HCT116 (cell line): ENCODE measurements at regions of chr6 and their contacts with region 1.

Region 1: DNA sequence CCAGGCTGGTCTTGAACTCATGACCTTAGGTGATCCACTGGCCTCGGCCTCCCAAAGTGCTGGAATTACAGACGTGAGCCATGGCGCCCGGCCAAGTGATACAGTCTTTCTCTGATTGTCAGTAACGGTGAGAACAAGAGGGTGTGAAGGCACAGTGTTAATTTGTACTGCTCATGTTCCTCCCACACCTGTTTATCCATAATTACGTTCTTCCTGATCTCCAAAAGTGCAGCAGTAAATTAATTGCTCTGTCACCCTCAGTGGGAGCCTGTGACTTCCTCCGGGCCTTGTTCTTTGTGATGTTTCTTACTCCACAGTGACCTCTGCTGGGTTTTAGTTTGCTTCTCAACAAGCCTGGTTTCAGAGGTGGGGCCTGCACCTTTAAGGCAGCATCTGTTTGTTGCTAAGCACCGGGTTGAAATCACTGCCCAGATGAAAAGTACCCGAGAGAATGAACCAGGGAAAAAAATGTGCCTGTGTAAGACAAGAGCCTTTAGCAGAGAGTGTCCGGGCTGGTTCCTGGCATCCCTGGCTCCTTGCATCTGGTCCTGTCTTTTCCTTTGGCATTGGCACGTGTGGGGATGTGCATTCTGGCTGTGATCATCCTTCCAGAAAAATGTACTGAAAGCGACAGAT is 89.1 kb upstream of the CLDN20 start:
- DNase-seq: peak; percentile 85
- ATAC-seq: peak; percentile 86
- H3K4me3 ChIP-seq: no peak overlapping the region
- H3K27ac ChIP-seq: no peak overlapping the region
- H3K4me1 ChIP-seq: peaks cover 19 to 37% of the 10 kb centered on the region in 2 experiments
- H3K27me3 ChIP-seq: no peaks in the 10 kb centered on the region
- CTCF ChIP-seq: peak; percentile 65 to 94 (median 72)
- POLR2A ChIP-seq: no peak
- RAD21 ChIP-seq: peak; percentile 96

Region 2: DNA sequence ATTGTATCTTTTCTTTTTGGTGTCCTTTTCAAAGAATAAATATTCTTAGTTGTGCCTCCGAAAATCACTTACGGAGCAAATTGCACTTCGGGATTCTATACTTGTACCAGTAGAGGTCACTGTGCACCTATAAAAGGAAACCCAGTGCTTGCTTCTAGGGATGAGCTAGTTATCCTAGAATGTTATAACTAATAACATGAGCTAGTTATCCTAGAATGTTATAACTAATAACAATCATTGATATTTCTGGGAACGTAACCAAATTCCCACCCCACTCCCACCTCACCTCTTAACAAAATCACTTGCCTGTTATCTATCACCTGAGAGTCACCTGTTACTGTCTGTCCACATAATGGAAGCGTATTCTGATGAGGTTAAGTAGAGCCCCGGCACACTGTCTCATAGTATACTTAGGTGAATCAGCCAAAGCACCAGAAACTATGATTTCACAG is 306.5 kb before region 1 on chr6:
- CTCF ChIA-PET with region 1: interaction called, 15 read pairs
- POLR2A ChIA-PET with region 1: no interaction called
- RAD21 ChIA-PET with region 1: interaction called in 1 of 2 experiments, 8 read pairs
- intact Hi-C with region 1: loop called (anchors 1 kb)
- DNase-seq: peak; percentile 12
- ATAC-seq: peak; percentile 68
- H3K4me3 ChIP-seq: no peak overlapping the region
- H3K27ac ChIP-seq: no peak overlapping the region
- H3K4me1 ChIP-seq: no peaks in the 10 kb centered on the region
- H3K27me3 ChIP-seq: no peaks in the 10 kb centered on the region
- CTCF ChIP-seq: peak; percentile 29 to 80 (median 67); a peak in 5 of 6 replicates
- POLR2A ChIP-seq: no peak
- RAD21 ChIP-seq: peak; percentile 70

Region 3: DNA sequence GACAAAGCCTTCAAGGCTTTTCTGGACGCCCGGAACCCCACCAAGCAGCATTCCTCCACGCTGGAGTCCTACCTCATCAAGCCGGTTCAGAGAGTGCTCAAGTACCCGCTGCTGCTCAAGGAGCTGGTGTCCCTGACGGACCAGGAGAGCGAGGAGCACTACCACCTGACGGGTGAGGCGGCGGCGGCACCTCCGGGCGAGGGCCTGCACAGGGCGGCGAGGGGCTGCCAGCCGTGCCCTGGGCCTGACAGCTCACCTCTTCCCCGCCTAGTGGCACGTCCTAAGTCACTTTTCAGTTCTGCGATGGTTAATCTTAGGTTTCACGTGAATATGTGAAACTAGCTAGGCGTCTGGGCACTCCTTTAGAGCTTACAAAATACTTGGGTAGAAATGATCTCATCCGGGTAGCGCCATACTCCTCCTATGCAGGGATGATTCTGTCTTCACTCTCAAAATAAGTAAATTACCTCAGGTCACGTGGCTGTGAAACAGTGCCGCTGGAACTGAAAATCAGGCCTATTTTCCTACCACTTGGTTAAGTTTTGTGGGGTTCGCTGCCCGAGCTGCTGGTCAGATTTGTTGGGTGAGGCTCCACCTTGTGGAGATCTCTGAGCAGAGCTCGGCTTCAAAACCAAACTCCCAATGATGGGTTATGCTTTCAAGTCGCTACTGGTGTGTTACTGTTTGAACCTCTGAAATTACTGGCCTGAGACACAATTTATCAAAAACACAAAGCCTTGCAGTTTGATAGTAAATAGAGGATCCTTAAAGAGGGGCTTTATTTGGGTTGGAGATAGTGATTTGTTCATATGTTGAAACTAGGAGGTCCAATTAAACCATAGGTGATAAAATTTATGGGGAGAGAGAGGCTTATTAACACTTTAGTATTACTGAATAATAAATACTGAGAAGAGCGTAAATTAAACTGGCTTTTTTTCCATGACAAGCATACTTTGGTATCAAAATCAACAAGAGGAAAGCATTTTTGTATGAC is 73.6 kb after region 1 on chr6:
- CTCF ChIA-PET with region 1: interaction called, 46 read pairs
- POLR2A ChIA-PET with region 1: interaction called, 3 read pairs
- RAD21 ChIA-PET with region 1: interaction called in 1 of 2 experiments, 4 read pairs
- intact Hi-C with region 1: loop called (anchors 1 kb)
- DNase-seq: peak; percentile 21
- ATAC-seq: peak; percentile 74
- H3K4me3 ChIP-seq: no peak overlapping the region
- H3K27ac ChIP-seq: no peak overlapping the region
- H3K4me1 ChIP-seq: peaks cover 0 to 12% of the 10 kb centered on the region in 2 experiments; a peak in 2 of 4 replicates
- H3K27me3 ChIP-seq: no peaks in the 10 kb centered on the region
- CTCF ChIP-seq: peak; percentile 57 to 70 (median 59); a peak in 5 of 6 replicates
- POLR2A ChIP-seq: no peak
- RAD21 ChIP-seq: peak; percentile 76

Region 4: DNA sequence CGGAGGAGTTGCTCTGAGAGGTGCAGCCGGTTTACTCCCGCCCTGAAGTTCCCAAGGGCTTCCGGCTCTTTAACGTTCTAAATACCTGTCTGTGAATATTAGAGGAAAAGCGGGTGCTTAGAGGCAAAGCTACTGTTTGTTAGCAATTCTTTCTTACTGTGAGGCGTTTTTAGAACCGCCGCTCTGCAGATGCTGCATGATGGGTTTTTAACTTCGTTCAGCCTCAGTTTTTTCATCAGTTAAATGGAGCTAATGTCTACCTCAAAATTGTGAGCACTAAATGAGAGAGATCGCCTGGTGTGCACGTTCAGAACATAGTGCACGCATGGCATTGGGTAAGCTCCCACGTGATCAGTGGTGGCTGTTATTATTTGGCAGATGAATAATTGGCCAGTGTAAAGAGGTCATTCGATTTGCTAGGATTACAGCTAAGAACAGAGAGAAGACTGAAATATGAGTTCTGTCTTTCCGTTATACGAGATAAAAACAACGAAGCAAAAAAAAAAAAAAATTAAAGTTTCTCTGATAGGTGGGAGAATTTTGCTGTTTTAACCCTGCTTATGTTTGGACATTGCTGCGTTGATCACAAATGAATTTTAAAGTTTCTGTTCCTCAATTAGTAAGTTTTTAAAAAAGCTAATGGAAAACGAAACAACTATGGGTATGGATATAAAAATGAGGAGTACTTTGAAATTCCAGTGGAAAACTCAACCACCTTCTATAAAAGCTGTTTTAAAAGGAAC is 140.2 kb after region 1 on chr6:
- CTCF ChIA-PET with region 1: interaction called, 3 read pairs
- POLR2A ChIA-PET with region 1: no interaction called
- RAD21 ChIA-PET with region 1: no interaction called
- intact Hi-C with region 1: loop called (anchors 5 kb)
- DNase-seq: peak; percentile 82
- ATAC-seq: peak; percentile 59
- H3K4me3 ChIP-seq: peak overlapping the region; percentile 89 to 92
- H3K27ac ChIP-seq: peak overlapping the region; percentile 77
- H3K4me1 ChIP-seq: peaks cover 5 to 14% of the 10 kb centered on the region in 2 experiments; a peak in 3 of 4 replicates
- H3K27me3 ChIP-seq: no peaks in the 10 kb centered on the region
- CTCF ChIP-seq: no peak
- POLR2A ChIP-seq: peak; percentile 88
- RAD21 ChIP-seq: peak; percentile 16; the same call in 1 of the 2 replicates